Caco-2 (cell line): ENCODE measurements at regions of chr13 and their contacts with region 1.

Region 1: DNA sequence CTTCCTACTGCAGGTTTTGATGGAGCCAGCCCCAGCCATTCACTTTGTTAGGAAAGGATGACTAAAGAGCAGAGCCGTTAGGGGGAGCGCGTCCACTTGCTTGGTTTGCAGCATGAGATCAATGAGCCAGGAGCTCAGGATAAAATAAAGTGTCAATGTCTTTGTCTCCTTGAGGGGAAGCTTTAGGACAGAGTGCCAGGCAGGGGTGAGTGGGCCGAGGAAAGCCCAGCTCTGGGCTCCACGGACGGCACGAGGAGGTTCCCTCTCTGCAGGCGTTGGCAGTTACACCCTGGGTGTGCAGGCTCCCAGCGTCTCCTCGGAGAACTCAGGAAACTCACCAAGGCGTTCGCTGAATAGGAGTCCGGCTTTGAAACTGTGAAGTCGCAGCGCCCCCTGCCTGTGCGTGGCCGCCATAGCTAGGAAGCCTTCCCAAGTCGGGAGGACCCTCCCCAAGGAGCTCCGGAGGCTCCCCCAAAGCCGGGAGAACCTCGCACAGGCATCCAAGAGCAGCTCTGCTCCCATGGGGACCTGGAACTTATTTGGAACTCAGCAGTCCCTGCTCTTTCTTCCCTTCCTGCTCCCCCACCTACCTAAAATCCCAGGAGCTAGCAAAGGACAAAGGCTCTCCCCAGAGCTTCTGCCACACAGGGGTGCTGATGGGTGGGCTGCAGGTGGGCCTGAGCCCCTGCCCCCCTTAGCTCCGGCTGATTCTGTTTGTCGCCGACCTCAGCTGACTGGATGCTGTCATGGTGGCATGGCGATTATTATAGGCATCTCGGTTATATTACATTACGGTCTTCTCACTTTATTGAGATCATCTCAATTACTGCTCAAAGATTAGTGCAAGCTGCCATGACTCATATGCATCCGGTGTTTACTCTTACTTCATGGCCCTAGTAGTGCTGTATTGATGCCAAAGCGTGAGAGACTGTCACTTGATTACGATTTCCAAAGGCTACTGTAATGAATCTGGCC is 34.4 kb downstream of the GSX1 start:
- DNase-seq: peak; percentile 89 to 91
- H3K4me3 ChIP-seq: peak overlapping the region; percentile 27
- H3K4me3 Mint-ChIP-seq: peak overlapping the region; percentile 70
- H3K27ac Mint-ChIP-seq: no peak overlapping the region
- H3K4me1 ChIP-seq: 0 out of 2 replicates have a peak, but pooled peaks cover 6% of the 10 kb centered on the region
- H3K4me1 Mint-ChIP-seq: peaks cover 7% of the 10 kb centered on the region
- H3K27me3 ChIP-seq: peaks cover under 1% of the 10 kb centered on the region; the same call in 1 of the 2 replicates
- H3K27me3 Mint-ChIP-seq: peaks cover 22% of the 10 kb centered on the region
- CTCF ChIP-seq: peak; percentile 94

Region 2: DNA sequence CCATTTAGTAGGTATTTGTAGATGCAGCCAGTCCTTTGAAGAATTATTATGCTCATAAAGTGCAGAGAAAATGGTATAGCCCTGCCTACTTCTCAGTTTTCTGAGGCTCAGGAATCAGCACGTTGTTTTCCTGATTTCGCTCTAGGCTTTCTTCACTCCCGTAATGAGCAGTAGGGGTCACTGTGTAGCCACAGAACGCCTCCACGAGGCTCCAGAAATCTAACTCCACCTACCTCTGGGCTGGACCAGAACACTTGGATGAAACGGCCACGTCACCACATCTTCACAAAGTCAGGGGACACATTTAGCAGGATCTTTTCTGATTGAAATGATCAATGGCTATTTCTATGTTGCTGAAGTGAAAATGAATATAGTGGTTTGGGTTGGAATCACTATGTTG is 452.0 kb before region 1 on chr13:
- CTCF ChIA-PET with region 1: interaction called, 19 read pairs
- POLR2A ChIA-PET with region 1: no interaction called
- intact Hi-C with region 1: loop called (anchors 1 kb)
- DNase-seq: peak; percentile 75 to 82
- H3K4me3 ChIP-seq: no peak overlapping the region
- H3K4me3 Mint-ChIP-seq: no peak overlapping the region
- H3K27ac Mint-ChIP-seq: no peak overlapping the region
- H3K4me1 ChIP-seq: peaks cover 11% of the 10 kb centered on the region; the same call in 1 of the 2 replicates
- H3K4me1 Mint-ChIP-seq: peaks cover 23% of the 10 kb centered on the region
- H3K27me3 ChIP-seq: no peaks in the 10 kb centered on the region
- H3K27me3 Mint-ChIP-seq: no peaks in the 10 kb centered on the region
- CTCF ChIP-seq: peak; percentile 61 to 90

Region 3: GRCh38 chr13:27665333-27665732 is 161.3 kb before region 1 on chr13:
- CTCF ChIA-PET with region 1: interaction called, 3 read pairs
- POLR2A ChIA-PET with region 1: no interaction called
- intact Hi-C with region 1: loop called (anchors 2 kb)
- DNase-seq: peak in 1 of 2 experiments; percentile 11
- H3K4me3 ChIP-seq: no peak overlapping the region
- H3K4me3 Mint-ChIP-seq: no peak overlapping the region
- H3K27ac Mint-ChIP-seq: no peak overlapping the region
- H3K4me1 ChIP-seq: 0 out of 2 replicates have a peak, but pooled peaks cover 3% of the 10 kb centered on the region
- H3K4me1 Mint-ChIP-seq: peaks cover 3% of the 10 kb centered on the region
- H3K27me3 ChIP-seq: no peaks in the 10 kb centered on the region
- H3K27me3 Mint-ChIP-seq: no peaks in the 10 kb centered on the region
- CTCF ChIP-seq: peak in 1 of 2 experiments; percentile 32

Region 4: DNA sequence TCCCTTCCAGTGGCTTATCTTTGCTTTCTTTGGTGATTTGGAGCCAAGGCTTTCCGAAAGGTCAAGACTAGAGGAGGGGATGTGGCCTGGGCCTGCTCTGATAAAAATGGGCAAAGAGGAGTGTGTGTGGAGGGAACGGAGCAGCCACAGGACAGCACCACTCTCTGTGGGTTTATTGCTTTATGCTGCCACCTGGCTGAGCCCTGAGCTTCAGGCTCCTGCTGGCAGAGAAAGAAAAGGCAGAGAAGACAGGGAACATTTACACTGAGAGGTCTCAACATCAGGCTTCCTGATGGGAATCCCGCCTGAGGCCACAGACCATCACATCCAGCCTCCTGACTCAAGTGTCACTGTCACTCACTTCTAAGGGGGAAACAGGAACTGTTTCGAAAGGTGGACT is 43.6 kb before region 1 on chr13:
- CTCF ChIA-PET with region 1: interaction called, 26 read pairs
- POLR2A ChIA-PET with region 1: no interaction called
- intact Hi-C with region 1: no loop called
- DNase-seq: peak in 1 of 2 experiments; percentile 32
- H3K4me3 ChIP-seq: no peak overlapping the region
- H3K4me3 Mint-ChIP-seq: no peak overlapping the region
- H3K27ac Mint-ChIP-seq: no peak overlapping the region
- H3K4me1 ChIP-seq: peaks cover 5% of the 10 kb centered on the region; the same call in 1 of the 2 replicates
- H3K4me1 Mint-ChIP-seq: peaks cover 6% of the 10 kb centered on the region
- H3K27me3 ChIP-seq: no peaks in the 10 kb centered on the region
- H3K27me3 Mint-ChIP-seq: peaks cover 15% of the 10 kb centered on the region
- CTCF ChIP-seq: peak; percentile 23 to 41

Region 5: DNA sequence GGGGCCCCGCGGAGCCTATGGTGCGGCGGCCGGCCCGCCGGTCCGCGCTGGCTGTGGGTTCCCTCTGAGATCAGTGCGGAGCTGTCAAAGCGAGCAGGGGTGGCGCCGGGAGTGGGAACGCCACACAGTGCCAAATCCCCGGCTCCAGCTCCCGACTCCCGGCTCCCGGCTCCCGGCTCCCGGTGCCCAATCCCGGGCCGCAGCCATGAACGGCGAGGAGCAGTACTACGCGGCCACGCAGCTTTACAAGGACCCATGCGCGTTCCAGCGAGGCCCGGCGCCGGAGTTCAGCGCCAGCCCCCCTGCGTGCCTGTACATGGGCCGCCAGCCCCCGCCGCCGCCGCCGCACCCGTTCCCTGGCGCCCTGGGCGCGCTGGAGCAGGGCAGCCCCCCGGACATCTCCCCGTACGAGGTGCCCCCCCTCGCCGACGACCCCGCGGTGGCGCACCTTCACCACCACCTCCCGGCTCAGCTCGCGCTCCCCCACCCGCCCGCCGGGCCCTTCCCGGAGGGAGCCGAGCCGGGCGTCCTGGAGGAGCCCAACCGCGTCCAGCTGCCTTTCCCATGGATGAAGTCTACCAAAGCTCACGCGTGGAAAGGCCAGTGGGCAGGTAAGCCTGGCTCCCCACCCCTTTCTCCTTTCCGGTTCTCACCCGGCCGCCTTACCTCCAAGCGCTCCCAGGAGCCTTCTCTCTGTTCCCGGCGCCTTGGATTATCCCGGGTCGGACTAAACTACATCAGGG is 93.4 kb after region 1 on chr13 and contains the start of gene PDX1:
- CTCF ChIA-PET with region 1: interaction called, 12 read pairs
- POLR2A ChIA-PET with region 1: no interaction called
- intact Hi-C with region 1: no loop called
- DNase-seq: peak; percentile 86 to 89
- H3K4me3 ChIP-seq: peak within 1 kb of the TSS; percentile 83
- H3K4me3 Mint-ChIP-seq: peak within 1 kb of the TSS; percentile 96
- H3K27ac Mint-ChIP-seq: peak within 1 kb of the TSS; percentile 68
- H3K4me1 ChIP-seq: peaks cover 25% of the 10 kb centered on the region
- H3K4me1 Mint-ChIP-seq: peaks cover 8% of the 10 kb centered on the region
- H3K27me3 ChIP-seq: no peaks in the 10 kb centered on the region
- H3K27me3 Mint-ChIP-seq: no peaks in the 10 kb centered on the region
- CTCF ChIP-seq: no peak
- total RNA-seq, gene PDX1: 3.7 and 3.9 TPM in 2 replicates

Region 6: DNA sequence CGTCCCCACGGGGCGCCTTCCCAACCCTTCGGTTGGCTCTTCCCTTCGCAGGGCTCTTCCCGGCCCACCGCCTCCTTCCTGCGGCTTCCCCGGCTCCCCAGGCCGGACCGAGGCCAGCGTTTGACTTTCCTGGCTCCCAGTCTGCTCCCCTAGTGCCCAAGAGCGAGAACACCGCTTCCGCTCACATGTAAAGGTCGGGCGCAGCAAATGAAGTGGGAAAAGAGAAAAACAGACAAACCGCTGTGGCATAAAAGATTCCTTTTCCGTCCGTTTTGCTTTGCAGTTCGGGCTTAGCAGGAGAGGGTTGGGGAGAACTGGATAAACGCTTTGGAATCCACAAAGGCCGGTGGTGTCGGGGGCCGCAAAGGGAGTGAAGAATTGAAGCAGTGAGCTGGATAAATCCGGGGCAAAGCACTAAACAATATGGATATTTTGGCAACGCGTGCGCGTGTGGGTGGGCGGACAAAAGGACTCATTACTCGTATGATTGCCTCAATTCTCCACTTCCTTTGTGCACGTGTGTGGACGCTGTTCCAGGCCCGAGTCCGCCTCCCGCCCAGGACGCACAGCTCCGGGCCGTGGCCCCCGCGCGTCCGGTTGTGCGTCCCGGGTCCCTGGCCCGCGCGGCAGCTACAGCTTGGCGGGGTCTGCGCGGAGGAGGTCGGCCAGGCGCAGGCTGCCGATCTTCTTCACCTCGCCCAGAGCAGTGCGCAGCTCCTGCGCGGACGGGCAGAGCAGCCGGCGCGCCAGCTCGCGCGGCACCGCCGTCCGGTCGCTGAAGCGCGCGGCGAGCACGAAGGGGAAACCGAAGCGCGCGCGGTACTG is 151.0 kb after region 1 on chr13:
- CTCF ChIA-PET with region 1: interaction called, 10 read pairs
- POLR2A ChIA-PET with region 1: no interaction called
- intact Hi-C with region 1: no loop called
- DNase-seq: peak in 1 of 2 experiments; percentile 43
- H3K4me3 ChIP-seq: peak overlapping the region; percentile 85
- H3K4me3 Mint-ChIP-seq: peak overlapping the region; percentile 82
- H3K27ac Mint-ChIP-seq: peak overlapping the region; percentile 10
- H3K4me1 ChIP-seq: peaks cover 43% of the 10 kb centered on the region
- H3K4me1 Mint-ChIP-seq: peaks cover 32% of the 10 kb centered on the region
- H3K27me3 ChIP-seq: no peaks in the 10 kb centered on the region
- H3K27me3 Mint-ChIP-seq: no peaks in the 10 kb centered on the region
- CTCF ChIP-seq: peak; percentile 25 to 34

Region 7: GRCh38 chr13:28282451-28282850 is 455.8 kb after region 1 on chr13:
- CTCF ChIA-PET with region 1: no interaction called
- POLR2A ChIA-PET with region 1: no interaction called
- intact Hi-C with region 1: no loop called
- DNase-seq: no peak
- H3K4me3 ChIP-seq: no peak overlapping the region
- H3K4me3 Mint-ChIP-seq: no peak overlapping the region
- H3K27ac Mint-ChIP-seq: no peak overlapping the region
- H3K4me1 ChIP-seq: no peaks in the 10 kb centered on the region
- H3K4me1 Mint-ChIP-seq: no peaks in the 10 kb centered on the region
- H3K27me3 ChIP-seq: no peaks in the 10 kb centered on the region
- H3K27me3 Mint-ChIP-seq: no peaks in the 10 kb centered on the region
- CTCF ChIP-seq: no peak